Astrocyte of the cerebellum (primary cell): ENCODE measurements at regions of chr4 and their contacts with region 1.

Region 1: DNA sequence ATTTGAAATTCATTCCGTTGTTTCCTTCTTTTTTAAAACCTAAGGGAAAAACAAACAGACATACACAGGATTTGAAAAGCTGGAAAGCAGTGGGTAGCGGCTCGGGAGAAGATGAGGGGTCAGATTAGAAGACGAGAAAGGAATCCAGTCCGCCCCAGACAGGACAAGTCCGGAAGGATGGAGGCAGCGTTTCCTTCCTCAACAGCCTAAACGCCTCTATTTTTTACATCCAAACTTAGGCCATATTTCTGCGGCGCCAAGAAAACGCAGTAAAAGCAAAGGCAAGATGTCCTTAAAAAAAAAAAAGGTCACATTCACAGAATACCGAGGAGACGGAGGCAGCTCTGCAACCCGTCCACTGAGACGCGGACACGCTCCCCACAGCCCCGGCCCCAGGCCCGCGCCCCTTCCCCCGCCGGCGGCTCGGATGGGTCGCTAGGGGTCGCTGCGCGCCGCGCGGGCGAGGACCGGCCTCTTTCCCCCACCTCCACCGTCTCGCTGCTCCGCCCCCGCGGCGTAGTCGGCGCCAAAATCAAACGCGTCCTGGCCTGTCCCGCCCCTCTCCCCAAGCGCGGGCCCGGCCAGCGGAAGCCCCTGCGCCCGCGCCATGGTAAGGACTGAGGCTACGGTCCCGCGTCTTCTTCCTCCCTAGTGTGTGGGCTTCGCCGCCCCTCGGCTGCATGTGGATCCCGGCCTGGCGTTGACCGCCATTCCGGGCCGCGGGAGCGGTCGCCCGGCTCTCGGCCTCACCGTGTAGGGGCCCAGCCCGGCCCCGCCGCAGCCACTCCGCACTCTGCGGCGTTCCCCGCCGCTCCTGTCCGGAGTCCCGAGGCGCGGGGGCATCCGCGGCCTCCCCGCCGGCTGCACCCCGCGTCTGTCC is at the start of gene MND1:
- DNase-seq: peak; percentile 41
- H3K4me3 ChIP-seq: peak within 1 kb of the TSS; percentile 70
- CTCF ChIP-seq: peak; percentile 84

Region 2: DNA sequence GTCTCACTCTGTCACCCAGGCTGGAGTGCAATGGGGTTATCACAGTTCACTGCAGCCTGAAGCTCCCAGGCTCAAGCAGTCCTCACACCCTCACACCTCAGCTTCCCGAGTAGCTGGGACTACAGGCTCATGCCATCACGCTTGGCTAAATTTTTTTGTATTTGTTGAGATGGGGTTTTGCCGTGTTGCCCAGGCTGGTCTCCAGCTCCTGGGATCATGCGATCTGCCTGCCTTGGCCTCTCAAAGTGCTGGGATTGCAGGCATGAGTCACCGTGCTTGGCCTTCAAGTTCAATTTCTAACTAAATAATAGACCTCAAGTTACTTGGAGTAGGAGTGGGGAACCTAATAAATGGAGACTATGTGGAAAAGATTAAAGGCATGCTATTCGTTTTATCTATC is 49.0 kb after region 1 on chr4:
- in situ Hi-C with region 1: no loop called
- DNase-seq: peak; percentile 49
- H3K4me3 ChIP-seq: no peak overlapping the region
- CTCF ChIP-seq: no peak

Region 3: DNA sequence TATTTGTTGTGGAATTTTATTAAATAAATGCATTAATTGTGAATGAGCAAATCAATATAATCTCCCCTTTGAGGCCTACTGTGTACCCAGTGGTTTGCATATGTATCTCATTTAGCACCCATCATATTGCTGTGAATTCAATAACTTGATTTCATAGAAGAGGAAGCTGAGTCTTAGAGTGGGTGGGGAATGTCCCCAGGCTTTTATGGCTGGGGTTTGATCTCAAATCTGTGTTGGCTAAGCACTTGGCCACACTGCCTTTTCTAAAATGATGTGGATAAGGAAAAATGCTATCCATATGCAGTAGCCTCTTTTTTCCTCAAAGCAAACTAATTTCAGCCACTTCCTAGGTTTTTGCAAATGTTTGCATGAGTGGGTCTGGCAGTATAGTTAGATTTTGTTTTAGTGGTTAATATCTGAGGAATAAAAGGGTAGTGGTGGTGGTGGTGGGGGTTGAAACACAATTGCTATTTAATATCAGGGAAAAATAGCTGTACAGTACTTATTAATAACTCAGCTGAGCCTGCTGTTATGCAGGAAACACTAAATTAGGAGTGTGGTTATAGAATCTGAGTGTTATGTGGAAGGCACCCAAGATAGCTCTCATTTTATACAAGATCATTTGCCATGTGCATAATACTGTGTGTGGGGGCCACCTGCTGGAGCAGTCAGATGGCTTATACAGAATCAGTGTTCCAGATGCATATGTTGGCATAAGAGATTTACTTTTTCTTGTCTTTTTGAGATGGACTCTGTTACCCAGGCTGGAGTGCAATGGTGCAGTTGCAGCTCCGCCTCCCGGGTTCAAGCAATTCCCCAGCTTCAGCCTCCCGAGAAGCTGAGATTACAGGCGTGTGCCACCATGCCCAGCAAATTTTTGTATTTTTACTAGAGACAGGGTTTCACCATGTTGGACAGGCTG is 229.8 kb after region 1 on chr4:
- in situ Hi-C with region 1: loop called (anchors 5 kb)
- DNase-seq: peak; percentile 86
- H3K4me3 ChIP-seq: no peak overlapping the region
- CTCF ChIP-seq: peak; percentile 74